Activated CD8-positive, alpha-beta T cell treated with anti-CD3 and anti-CD28 coated beads for 36 hours (primary cell): ENCODE measurements at regions of chr18 and their contacts with region 1.

Region 1: DNA sequence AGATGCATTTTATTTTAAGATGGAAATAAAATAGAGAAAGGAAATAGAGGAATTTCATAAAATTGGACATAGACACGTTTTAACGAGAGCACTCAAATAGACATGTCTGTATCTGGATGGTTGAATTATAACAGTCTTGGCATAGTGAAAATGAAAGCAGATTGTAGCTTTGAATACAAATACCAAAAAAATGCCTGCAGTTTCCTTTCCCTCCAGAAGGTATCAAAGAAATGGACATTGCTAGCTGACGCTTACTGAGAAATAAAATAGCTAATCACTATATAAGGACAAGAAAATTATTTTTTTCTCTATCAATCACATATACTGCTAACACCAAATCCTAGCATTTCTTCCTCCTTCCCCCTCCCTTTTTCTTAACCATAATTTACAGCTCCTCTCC is 11.4 kb upstream of the MAPRE2 start:
- DNase-seq: no peak
- ATAC-seq: peak; percentile 73
- H3K4me3 Mint-ChIP-seq: peak overlapping the region; percentile 76
- H3K27ac Mint-ChIP-seq: peak overlapping the region; percentile 99
- H3K4me1 Mint-ChIP-seq: peaks cover 60% of the 10 kb centered on the region
- H3K27me3 Mint-ChIP-seq: no peaks in the 10 kb centered on the region
- CTCF ChIP-seq: peak; percentile 28

Region 2: GRCh38 chr18:34995746-34996145 is 34.0 kb before region 1 on chr18:
- CTCF ChIA-PET with region 1: no interaction called
- POLR2A ChIA-PET with region 1: no interaction called
- intact Hi-C with region 1: no loop called
- DNase-seq: no peak
- ATAC-seq: no peak
- H3K4me3 Mint-ChIP-seq: no peak overlapping the region
- H3K27ac Mint-ChIP-seq: no peak overlapping the region
- H3K4me1 Mint-ChIP-seq: peaks cover 6% of the 10 kb centered on the region
- H3K27me3 Mint-ChIP-seq: no peaks in the 10 kb centered on the region
- CTCF ChIP-seq: no peak

Region 3: GRCh38 chr18:35005963-35006577 is 23.7 kb before region 1 on chr18:
- CTCF ChIA-PET with region 1: interaction called, 19 read pairs
- POLR2A ChIA-PET with region 1: interaction called, 4 read pairs
- intact Hi-C with region 1: no loop called
- DNase-seq: no peak
- ATAC-seq: peak; percentile 83
- H3K4me3 Mint-ChIP-seq: no peak overlapping the region
- H3K27ac Mint-ChIP-seq: no peak overlapping the region
- H3K4me1 Mint-ChIP-seq: no peaks in the 10 kb centered on the region
- H3K27me3 Mint-ChIP-seq: no peaks in the 10 kb centered on the region
- CTCF ChIP-seq: peak; percentile 68

Region 4: GRCh38 chr18:35040988-35041814 is 11.4 kb after region 1 on chr18 and contains the start of gene MAPRE2:
- CTCF ChIA-PET with region 1: interaction called, 69 read pairs
- POLR2A ChIA-PET with region 1: interaction called, 27 read pairs
- intact Hi-C with region 1: no loop called
- DNase-seq: peak; percentile 100
- ATAC-seq: peak; percentile 79
- H3K4me3 Mint-ChIP-seq: peak within 1 kb of the TSS; percentile 85
- H3K27ac Mint-ChIP-seq: peak within 1 kb of the TSS; percentile 98
- H3K4me1 Mint-ChIP-seq: peaks cover 54% of the 10 kb centered on the region
- H3K27me3 Mint-ChIP-seq: no peaks in the 10 kb centered on the region
- CTCF ChIP-seq: peak; percentile 22
- total RNA-seq, gene MAPRE2: 70.7 to 72.7 TPM

Region 5: GRCh38 chr18:35122586-35123224 is 92.9 kb after region 1 on chr18:
- CTCF ChIA-PET with region 1: interaction called, 20 read pairs
- POLR2A ChIA-PET with region 1: no interaction called
- intact Hi-C with region 1: no loop called
- DNase-seq: peak; percentile 67
- ATAC-seq: peak; percentile 89
- H3K4me3 Mint-ChIP-seq: peak overlapping the region; percentile 60
- H3K27ac Mint-ChIP-seq: peak overlapping the region; percentile 82
- H3K4me1 Mint-ChIP-seq: peaks cover 44% of the 10 kb centered on the region
- H3K27me3 Mint-ChIP-seq: no peaks in the 10 kb centered on the region
- CTCF ChIP-seq: peak; percentile 30

Region 6: GRCh38 chr18:35143622-35144596 is 114.1 kb after region 1 on chr18:
- CTCF ChIA-PET with region 1: interaction called, 37 read pairs
- POLR2A ChIA-PET with region 1: interaction called, 3 read pairs
- intact Hi-C with region 1: no loop called
- DNase-seq: peak; percentile 51
- ATAC-seq: peak; percentile 65
- H3K4me3 Mint-ChIP-seq: no peak overlapping the region
- H3K27ac Mint-ChIP-seq: no peak overlapping the region
- H3K4me1 Mint-ChIP-seq: peaks cover 2% of the 10 kb centered on the region
- H3K27me3 Mint-ChIP-seq: no peaks in the 10 kb centered on the region
- CTCF ChIP-seq: peak; percentile 41